K562 (cell line): ENCODE measurements at regions of chr3 and their contacts with region 1.

Region 1: DNA sequence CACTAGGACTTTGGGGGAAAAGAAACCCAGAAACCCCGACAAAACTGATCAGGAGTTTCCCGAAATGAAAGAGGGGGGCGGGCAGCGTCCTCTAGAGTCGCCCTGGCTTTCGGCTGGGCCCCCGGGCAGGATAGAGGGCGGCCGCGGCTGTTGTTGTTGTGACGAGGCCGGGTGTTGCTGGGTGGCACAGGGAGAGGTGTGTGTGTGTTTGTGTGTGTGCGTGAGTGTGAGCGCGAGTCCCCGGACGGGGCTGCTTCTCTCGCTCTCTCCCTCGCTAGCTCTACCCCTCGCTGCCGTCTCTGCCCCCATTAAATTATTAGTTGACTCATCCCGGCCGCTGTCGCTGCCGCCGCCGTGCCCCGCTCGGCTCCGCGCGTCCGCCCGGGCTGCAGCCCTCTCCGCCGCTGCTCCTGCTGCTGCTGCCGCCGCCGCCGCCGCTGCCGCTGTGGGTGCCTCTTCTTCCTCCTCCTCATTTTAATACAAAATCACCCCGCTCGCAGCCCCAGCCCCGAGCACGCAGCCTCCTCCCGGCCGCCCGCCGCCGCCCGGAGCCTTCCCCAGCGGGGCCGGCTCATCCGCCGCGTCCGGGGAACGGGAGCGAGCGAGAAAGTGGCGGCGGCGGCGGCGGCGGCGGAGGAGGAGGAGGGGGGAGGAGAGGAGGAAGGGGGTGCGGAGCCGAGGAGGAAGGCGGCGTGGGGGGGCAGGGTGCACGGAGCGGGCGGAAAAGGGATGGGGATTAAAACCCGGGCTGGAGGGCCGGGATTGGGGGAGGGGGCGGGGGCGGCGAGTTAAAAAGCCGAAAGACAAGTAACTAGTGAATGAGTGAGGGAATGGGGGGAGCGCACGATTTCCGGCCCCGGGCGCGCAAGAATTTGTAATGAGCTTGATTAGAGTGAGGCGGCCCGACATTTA is at the start of gene SATB1:
- DNase-seq: peak; percentile 19 to 41 (median 35)
- ATAC-seq: peak; percentile 80
- H3K4me3 ChIP-seq: peak within 1 kb of the TSS; percentile 38
- H3K27ac ChIP-seq: no peak within 1 kb of the TSS
- H3K4me1 ChIP-seq: peaks cover 0 to 14% of the 10 kb centered on the region in 2 experiments; a peak in 2 of 5 replicates
- H3K27me3 ChIP-seq: peaks cover 6 to 15% of the 10 kb centered on the region in 2 experiments; a peak in 3 of 5 replicates
- CTCF ChIP-seq: no peak
- EP300 ChIP-seq: no peak
- POLR2A ChIP-seq: no peak
- RAD21 ChIP-seq: no peak
- polyA plus RNA-seq, gene SATB1: 0.03 to 0.08 TPM

Region 2: DNA sequence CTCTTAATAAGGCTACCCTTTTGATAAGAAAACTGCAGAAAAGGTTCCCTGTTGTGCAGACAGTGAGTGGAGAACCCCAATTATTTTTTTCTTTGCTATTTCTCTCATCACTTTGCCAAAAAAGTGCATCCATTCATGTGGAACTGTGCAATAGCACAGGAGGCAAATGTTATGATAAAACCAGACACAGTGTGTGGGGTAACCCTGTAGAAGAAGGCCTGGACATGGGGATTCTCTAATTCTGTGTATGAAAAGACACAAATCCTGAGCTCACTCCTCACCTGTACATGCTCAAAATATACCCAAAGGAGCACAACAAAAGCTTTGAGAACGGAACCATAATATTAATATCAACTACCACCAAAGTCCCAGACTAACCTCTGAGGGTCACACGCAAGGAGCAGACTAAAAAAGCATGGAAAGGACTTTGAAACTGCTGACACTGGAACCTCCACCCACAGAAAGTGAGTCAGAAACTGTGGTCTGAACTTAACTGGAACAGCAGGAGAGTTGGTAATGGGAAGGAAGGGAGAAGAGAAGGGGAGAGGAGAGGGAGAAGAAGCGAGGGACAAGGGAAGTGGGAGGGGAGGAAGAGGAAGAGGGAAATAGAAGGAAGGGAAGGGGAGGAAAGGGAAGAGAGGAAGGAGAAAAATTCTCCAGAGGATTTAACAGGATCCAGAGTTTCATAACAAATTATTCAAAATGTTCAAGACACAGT is 982.5 kb before region 1 on chr3:
- CTCF ChIA-PET with region 1: no interaction called
- POLR2A ChIA-PET with region 1: no interaction called
- in situ Hi-C with region 1: loop called (anchors 25 kb)
- intact Hi-C with region 1: loop called (anchors 10 kb)
- DNase-seq: peak in 3 of 4 experiments; percentile 11 to 78 (median 46)
- ATAC-seq: peak; percentile 89
- H3K4me3 ChIP-seq: no peak overlapping the region
- H3K27ac ChIP-seq: peak overlapping the region; percentile 70
- H3K4me1 ChIP-seq: peaks cover 0 to 29% of the 10 kb centered on the region in 2 experiments; a peak in 3 of 5 replicates
- H3K27me3 ChIP-seq: no peaks in the 10 kb centered on the region
- CTCF ChIP-seq: no peak
- EP300 ChIP-seq: no peak; the same call in 1 of the 2 replicates
- POLR2A ChIP-seq: no peak
- RAD21 ChIP-seq: no peak; a peak in 1 of 4 replicates